GM12878 (cell line): ENCODE measurements at regions of chr20 and their contacts with region 1.

Region 1: DNA sequence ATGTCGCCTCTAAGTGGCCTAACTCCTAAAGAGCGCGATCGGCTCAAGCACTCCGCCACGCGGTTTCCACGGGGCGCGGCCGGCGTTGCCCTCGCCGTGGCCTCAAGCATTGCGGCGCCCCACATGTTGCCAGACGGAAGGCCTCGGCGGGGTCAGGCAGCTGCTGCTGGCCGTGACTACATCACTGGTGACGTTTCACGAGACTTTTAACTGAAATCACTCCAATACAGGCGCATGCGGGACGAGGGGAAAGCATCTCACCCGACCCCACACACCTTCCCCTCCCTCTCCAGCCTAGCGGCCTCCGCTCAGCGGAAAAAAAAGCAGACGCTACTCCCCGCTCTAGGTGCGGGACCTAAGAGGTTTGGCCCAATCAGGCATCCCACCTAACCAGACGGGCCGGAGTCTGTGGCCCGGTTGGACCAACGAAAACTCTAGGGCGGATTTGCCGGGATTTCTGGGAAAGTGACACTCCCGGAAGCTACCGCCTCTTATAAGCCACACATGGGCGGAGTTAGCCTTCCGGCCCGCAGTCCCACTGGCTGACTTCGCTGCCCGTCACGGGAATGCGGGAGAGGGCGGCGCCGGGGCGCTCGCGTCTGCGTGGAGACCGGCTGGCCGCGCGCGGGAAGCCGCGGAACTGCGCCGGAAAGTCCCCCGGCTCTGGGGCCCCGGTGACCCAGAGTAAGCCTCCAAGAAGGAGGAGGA is at the start of gene NXT1:
- DNase-seq: peak; percentile 92
- ATAC-seq: peak; percentile 92
- H3K4me3 ChIP-seq: peak within 1 kb of the TSS; percentile 89
- H3K27ac ChIP-seq: peak within 1 kb of the TSS; percentile 95
- H3K4me1 ChIP-seq: peaks cover 4% of the 10 kb centered on the region
- H3K27me3 ChIP-seq: no peaks in the 10 kb centered on the region
- CTCF ChIP-seq: peak in 2 of 3 experiments; percentile 16 to 18; a peak in 1 of 6 replicates
- EP300 ChIP-seq: peak in 1 of 2 experiments; percentile 12; a peak in 2 of 4 replicates
- POLR2A ChIP-seq: peak; percentile 83
- RAD21 ChIP-seq: no peak
- polyA plus RNA-seq, gene NXT1: 10.2 to 24.2 TPM

Region 2: DNA sequence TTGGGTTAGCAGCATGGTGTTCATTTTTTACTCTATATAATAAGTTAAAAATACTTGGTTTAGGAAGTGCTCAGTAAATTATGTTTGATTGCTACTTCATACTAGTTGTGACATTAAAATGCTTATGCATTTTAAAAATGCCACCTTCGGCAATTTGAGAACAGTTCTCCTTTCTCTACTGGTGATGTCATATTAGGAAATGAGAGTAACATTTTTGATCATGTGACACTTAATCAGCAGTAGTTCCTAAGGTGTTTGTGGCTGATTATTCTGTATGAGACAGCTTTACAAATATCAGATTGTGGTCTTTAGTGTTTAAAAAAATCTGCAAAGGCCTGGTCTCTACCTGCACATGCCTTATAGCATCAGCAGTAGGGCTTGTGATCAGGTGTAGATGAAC is 16.0 kb after region 1 on chr20:
- CTCF ChIA-PET with region 1: interaction called, 11 read pairs
- POLR2A ChIA-PET with region 1: interaction called, 61 read pairs
- RAD21 ChIA-PET with region 1: interaction called, 12 read pairs
- SMC1A ChIA-PET with region 1: interaction called, 5 read pairs
- in situ Hi-C with region 1: no loop called
- intact Hi-C with region 1: no loop called
- DNase-seq: no peak
- ATAC-seq: no peak
- H3K4me3 ChIP-seq: peak overlapping the region; percentile 18; the same call in 1 of the 2 replicates
- H3K27ac ChIP-seq: no peak overlapping the region
- H3K4me1 ChIP-seq: peaks cover 16% of the 10 kb centered on the region
- H3K27me3 ChIP-seq: no peaks in the 10 kb centered on the region
- CTCF ChIP-seq: no peak
- EP300 ChIP-seq: no peak
- POLR2A ChIP-seq: no peak
- RAD21 ChIP-seq: no peak

Region 3: GRCh38 chr20:23391707-23392310 is 41.5 kb after region 1 on chr20:
- CTCF ChIA-PET with region 1: no interaction called
- POLR2A ChIA-PET with region 1: no interaction called
- RAD21 ChIA-PET with region 1: no interaction called
- SMC1A ChIA-PET with region 1: no interaction called
- in situ Hi-C with region 1: no loop called
- intact Hi-C with region 1: no loop called
- DNase-seq: no peak
- ATAC-seq: no peak
- H3K4me3 ChIP-seq: no peak overlapping the region
- H3K27ac ChIP-seq: no peak overlapping the region
- H3K4me1 ChIP-seq: no peaks in the 10 kb centered on the region
- H3K27me3 ChIP-seq: no peaks in the 10 kb centered on the region
- CTCF ChIP-seq: no peak
- EP300 ChIP-seq: no peak
- POLR2A ChIP-seq: no peak
- RAD21 ChIP-seq: no peak

Region 4: DNA sequence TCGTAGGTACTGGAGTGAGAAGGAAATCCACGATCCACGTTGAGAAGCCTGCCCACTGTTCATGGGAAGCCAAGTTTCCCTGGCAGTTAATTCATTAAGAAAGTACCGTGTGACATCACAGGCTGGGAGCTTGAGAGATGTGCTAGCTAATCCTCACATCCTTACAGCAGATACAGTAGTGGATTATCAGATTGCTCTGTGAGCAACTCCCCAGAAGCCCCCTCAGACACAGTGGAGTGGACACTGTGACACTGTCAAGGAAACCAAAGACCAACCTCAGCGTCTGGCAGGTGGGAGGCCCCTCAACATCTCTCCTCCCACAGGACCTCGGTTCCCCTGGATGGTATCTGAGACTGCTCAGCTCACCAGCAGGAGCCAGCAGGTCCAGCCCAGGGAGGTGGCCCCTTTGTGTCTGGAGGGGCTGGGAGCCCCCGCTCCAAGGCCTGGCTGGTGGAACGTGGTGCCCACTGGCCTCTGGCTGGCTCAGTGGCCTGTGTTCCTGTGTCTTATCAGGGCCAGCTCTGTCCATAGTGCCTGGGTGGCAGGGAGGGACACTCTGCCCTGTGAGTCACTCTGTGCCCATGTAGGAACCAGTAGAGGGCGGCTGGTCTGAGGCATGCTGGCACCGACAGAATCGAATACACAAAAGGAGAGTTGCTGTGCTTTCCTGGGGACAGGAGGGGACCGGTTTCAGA is 1904.8 kb after region 1 on chr20:
- CTCF ChIA-PET with region 1: no interaction called
- POLR2A ChIA-PET with region 1: no interaction called
- RAD21 ChIA-PET with region 1: no interaction called
- SMC1A ChIA-PET with region 1: no interaction called
- in situ Hi-C with region 1: loop called (anchors 25 kb)
- intact Hi-C with region 1: no loop called
- DNase-seq: no peak
- ATAC-seq: no peak
- H3K4me3 ChIP-seq: no peak overlapping the region
- H3K27ac ChIP-seq: no peak overlapping the region
- H3K4me1 ChIP-seq: peaks cover 16% of the 10 kb centered on the region
- H3K27me3 ChIP-seq: no peaks in the 10 kb centered on the region
- CTCF ChIP-seq: no peak
- EP300 ChIP-seq: no peak
- POLR2A ChIP-seq: no peak
- RAD21 ChIP-seq: no peak